Heart left ventricle (tissue), 16 donors: ENCODE measurements at regions of chr18 and their contacts with region 1.

Region 1: DNA sequence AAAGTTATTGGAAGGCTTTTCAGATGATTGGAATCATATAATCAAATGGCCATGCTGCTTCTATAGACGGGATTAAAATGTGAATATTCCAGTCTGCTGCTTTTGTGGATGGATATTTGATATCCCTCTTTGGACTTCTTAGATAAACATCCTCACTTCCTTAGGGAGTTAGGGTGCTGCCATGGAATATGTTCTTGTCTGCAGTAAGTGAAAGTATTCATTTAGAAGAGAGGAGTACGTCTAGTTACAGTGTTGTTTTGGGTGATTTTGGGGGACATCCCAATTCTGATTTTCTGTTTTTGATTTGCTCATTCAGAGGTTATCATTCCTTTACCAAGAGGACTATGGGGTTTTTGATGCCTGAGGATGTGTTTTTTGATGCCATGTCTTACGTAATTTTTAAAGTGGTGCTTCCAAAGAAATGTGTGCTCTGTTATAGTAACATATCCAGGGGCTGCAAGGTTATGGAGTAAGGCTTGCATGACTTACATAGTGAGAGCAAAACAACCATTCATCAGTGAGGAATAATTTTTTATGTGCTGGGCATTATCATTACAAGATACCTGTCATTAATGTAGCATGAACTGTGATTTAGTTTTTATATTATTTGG is 33.6 kb downstream of the ASXL3 start:
- DNase-seq: no peak
- ATAC-seq: no peak
- H3K4me3 ChIP-seq: no peak overlapping the region
- H3K27ac ChIP-seq: no peak overlapping the region
- H3K4me1 ChIP-seq: no peaks in the 10 kb centered on the region
- H3K27me3 ChIP-seq: no peaks in the 10 kb centered on the region
- CTCF ChIP-seq: no peak
- POLR2A ChIP-seq: no peak

Region 2: DNA sequence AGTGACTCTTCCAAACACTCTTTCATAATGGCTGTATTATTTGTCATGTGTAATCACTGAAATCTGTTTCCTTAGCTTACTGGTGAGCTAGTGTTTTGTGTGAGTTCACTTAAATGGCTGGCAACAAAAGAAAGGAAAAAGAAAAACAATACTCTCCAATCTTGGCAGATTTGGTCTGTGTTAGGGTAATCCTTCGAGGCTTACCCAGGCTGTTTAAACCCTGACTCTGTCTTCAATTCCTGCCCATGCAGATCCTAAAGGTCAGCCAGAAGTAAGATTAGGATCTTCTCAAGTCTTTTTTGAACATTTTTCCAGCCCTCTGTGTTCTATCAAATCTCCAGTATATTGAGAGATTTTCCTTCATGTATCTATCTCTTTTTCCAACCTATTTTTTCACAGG is 256.4 kb before region 1 on chr18:
- intact Hi-C with region 1: no loop called
- DNase-seq: no peak
- ATAC-seq: no peak
- H3K4me3 ChIP-seq: no peak overlapping the region
- H3K27ac ChIP-seq: no peak overlapping the region
- H3K4me1 ChIP-seq: no peaks in the 10 kb centered on the region
- H3K27me3 ChIP-seq: no peaks in the 10 kb centered on the region
- CTCF ChIP-seq: no peak
- POLR2A ChIP-seq: no peak

Region 3: GRCh38 chr18:33673689-33674088 is 62.1 kb after region 1 on chr18:
- intact Hi-C with region 1: loop called in 1 of 10 experiments (anchors 10 kb)
- DNase-seq: no peak
- ATAC-seq: no peak
- H3K4me3 ChIP-seq: no peak overlapping the region
- H3K27ac ChIP-seq: no peak overlapping the region
- H3K4me1 ChIP-seq: no peaks in the 10 kb centered on the region
- H3K27me3 ChIP-seq: no peaks in the 10 kb centered on the region
- CTCF ChIP-seq: no peak
- POLR2A ChIP-seq: no peak

Region 4: DNA sequence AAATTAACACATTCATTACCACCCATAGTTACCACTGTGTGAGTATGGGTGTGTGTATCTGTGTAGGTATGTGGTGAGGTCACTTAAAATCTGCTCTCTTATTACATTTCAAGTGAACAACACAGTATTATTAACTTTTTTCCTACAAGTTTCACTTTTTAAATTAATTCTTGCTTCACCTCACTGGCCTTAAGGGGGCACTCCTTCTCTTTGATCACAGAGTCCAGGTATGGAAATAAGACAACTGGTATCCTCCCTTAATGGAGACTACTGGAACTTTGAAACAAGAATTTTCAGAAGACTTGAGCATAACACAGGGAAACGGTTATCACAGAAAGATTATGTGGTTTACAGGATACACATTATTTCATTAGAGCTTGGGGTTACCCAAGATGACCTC is 222.2 kb after region 1 on chr18:
- intact Hi-C with region 1: no loop called
- DNase-seq: no peak
- ATAC-seq: no peak
- H3K4me3 ChIP-seq: no peak overlapping the region
- H3K27ac ChIP-seq: no peak overlapping the region
- H3K4me1 ChIP-seq: no peaks in the 10 kb centered on the region
- H3K27me3 ChIP-seq: no peaks in the 10 kb centered on the region
- CTCF ChIP-seq: no peak
- POLR2A ChIP-seq: no peak